ENCODE measurements at regions of chr9 and their contacts with region 1.

Region 1: GRCh38 chr9:76393963-76394679 is at the start of gene RFK:
- DNase-seq: peak; percentile 98
- ATAC-seq: peak; percentile 90
- H3K4me3 Mint-ChIP-seq: peak within 1 kb of the TSS; percentile 99
- H3K27ac Mint-ChIP-seq: peak within 1 kb of the TSS; percentile 99
- H3K4me1 Mint-ChIP-seq: peaks cover 22% of the 10 kb centered on the region
- H3K27me3 Mint-ChIP-seq: no peaks in the 10 kb centered on the region
- CTCF ChIP-seq: no peak
- total RNA-seq, gene RFK: 7.7 and 8.0 TPM in 2 replicates

Region 2: DNA sequence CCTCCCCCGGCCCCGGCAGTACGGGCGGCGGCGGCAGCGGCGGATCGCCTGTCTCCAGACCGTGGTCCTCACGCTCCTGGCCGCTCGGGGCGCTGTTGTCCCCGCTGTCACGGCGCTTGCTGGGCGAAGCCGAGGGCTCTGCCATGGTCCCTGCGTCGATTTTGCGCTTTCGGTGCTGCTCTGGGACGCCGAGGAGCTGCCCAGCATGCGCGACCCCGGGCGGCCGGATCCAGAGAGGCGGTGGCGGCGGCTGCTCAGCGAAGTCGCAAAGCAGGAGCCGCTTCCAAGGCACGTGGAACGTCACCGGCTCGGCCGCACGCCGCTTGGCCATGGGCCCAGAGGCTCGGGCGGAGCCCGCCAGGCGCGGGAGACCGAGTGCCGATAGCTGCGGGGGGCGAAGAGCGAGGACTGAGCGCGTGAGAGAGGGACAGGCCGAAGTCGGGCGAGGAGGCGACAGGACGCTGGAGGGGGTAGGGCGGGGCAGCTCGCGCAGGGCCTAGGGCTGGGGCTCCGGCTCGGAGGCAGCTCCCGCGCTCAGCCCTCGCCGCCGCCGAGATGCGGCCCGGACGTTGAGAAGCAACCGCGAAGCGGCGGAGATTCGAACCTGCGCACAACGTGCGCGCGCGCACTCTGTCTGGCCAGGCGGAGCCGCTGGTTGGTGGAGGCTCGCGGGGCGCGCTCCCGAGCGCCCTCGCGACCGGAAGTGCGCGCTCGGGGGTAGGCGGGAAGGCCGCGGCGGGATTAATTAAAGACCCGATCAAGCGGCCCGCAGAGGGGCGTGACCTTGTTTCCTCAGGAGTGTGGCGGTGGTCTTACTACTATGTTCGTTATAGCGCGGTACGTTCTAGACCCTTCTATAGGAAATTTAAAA is 1441.6 kb before region 1 on chr9 and contains the start of gene C9orf40:
- CTCF ChIA-PET with region 1: no interaction called
- POLR2A ChIA-PET with region 1: no interaction called
- intact Hi-C with region 1: loop called (anchors 10 kb)
- DNase-seq: peak; percentile 90
- ATAC-seq: peak; percentile 89
- H3K4me3 Mint-ChIP-seq: peak within 1 kb of the TSS; percentile 99
- H3K27ac Mint-ChIP-seq: peak within 1 kb of the TSS; percentile 95
- H3K4me1 Mint-ChIP-seq: peaks cover 28% of the 10 kb centered on the region
- H3K27me3 Mint-ChIP-seq: no peaks in the 10 kb centered on the region
- CTCF ChIP-seq: peak; percentile 37
- total RNA-seq, gene C9orf40: 4.6 and 5.7 TPM in 2 replicates

Region 3: GRCh38 chr9:76419782-76420380 is 25.8 kb after region 1 on chr9:
- CTCF ChIA-PET with region 1: interaction called, 15 read pairs
- POLR2A ChIA-PET with region 1: no interaction called
- intact Hi-C with region 1: no loop called
- DNase-seq: no peak
- ATAC-seq: no peak
- H3K4me3 Mint-ChIP-seq: no peak overlapping the region
- H3K27ac Mint-ChIP-seq: no peak overlapping the region
- H3K4me1 Mint-ChIP-seq: no peaks in the 10 kb centered on the region
- H3K27me3 Mint-ChIP-seq: peaks cover 2% of the 10 kb centered on the region
- CTCF ChIP-seq: no peak

Region 4: GRCh38 chr9:76475686-76476085 is 81.6 kb after region 1 on chr9:
- CTCF ChIA-PET with region 1: no interaction called
- POLR2A ChIA-PET with region 1: interaction called, 13 read pairs
- intact Hi-C with region 1: loop called (anchors 1 kb)
- DNase-seq: no peak
- ATAC-seq: no peak
- H3K4me3 Mint-ChIP-seq: no peak overlapping the region
- H3K27ac Mint-ChIP-seq: no peak overlapping the region
- H3K4me1 Mint-ChIP-seq: peaks cover 67% of the 10 kb centered on the region
- H3K27me3 Mint-ChIP-seq: peaks cover 5% of the 10 kb centered on the region
- CTCF ChIP-seq: no peak

Region 5: DNA sequence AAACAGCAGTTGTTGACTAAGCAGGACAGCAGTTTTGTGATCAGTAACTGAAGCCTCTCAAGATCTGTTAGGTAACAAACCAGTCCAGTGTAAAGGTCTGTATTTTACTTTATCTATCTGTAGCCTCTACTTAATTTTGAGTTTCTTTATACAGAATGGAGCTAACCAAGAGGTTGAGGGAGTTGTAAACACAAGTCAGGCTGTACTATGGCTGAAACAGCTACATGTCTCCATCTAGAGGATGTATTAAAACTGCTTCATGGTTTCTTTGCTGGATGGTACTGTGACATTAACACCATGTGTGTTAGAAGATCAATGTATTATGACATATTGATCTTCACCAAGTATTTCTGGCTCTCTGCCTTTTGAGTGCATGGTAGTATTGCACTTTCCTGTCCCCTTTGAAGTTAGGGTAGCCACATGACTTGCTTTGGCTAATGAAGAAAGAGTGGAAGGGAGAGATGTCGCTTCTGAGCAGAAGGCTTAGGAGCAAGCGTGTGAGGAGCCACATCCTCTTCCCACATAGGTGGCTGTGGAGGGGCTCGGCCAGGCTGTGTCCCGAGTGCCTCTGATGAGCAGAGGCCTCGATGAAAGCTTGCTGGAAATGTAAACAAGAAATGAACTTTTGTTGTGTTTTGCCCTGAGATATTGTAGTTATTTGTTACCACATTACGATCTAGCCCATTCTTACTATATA is 264.6 kb after region 1 on chr9:
- CTCF ChIA-PET with region 1: interaction called, 4 read pairs
- POLR2A ChIA-PET with region 1: no interaction called
- intact Hi-C with region 1: loop called (anchors 2 kb)
- DNase-seq: no peak
- ATAC-seq: peak; percentile 94
- H3K4me3 Mint-ChIP-seq: no peak overlapping the region
- H3K27ac Mint-ChIP-seq: no peak overlapping the region
- H3K4me1 Mint-ChIP-seq: peaks cover 41% of the 10 kb centered on the region
- H3K27me3 Mint-ChIP-seq: peaks cover 3% of the 10 kb centered on the region
- CTCF ChIP-seq: peak; percentile 19

Region 6: GRCh38 chr9:77456829-77457437 is 1062.8 kb after region 1 on chr9:
- CTCF ChIA-PET with region 1: no interaction called
- POLR2A ChIA-PET with region 1: no interaction called
- intact Hi-C with region 1: loop called (anchors 5 kb)
- DNase-seq: peak; percentile 59
- ATAC-seq: peak; percentile 85
- H3K4me3 Mint-ChIP-seq: no peak overlapping the region
- H3K27ac Mint-ChIP-seq: no peak overlapping the region
- H3K4me1 Mint-ChIP-seq: peaks cover 6% of the 10 kb centered on the region
- H3K27me3 Mint-ChIP-seq: peaks cover 4% of the 10 kb centered on the region
- CTCF ChIP-seq: no peak